Activated CD8-positive, alpha-beta T cell treated with anti-CD3 and anti-CD28 coated beads, Interleukin-2, amount 10 ng/mL, durations not matched to agents 7 days and 5 days (primary cell): ENCODE measurements at regions of chr9 and their contacts with region 1.

Region 1: DNA sequence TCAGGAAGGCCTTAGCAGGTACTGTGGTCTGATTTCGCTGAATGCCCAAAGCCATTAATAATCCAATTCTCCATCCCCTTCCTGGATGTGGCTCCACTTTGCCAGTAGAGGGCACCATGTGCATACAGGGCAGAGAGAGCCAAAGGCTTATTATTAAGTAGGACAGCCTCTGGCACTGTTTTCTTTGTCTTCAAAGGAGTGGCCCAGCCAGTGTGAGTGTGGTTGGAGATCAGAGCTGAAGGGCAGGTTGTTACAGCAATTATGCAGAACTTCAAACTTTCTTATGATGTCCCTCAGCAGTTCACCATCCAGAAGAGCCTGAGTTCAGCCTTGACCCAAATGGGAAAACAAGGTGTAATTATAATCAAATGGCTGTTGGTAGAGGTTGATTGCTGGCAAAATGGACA is 38.6 kb upstream of the CEMIP2 start:
- DNase-seq: peak; percentile 78
- ATAC-seq: peak; percentile 99
- H3K4me3 Mint-ChIP-seq: no peak overlapping the region
- H3K27ac Mint-ChIP-seq: no peak overlapping the region
- H3K4me1 Mint-ChIP-seq: peaks cover 5% of the 10 kb centered on the region
- H3K27me3 Mint-ChIP-seq: no peaks in the 10 kb centered on the region

Region 2: GRCh38 chr9:71604197-71605063 is 202.5 kb before region 1 on chr9:
- CTCF ChIA-PET with region 1: interaction called, 11 read pairs
- POLR2A ChIA-PET with region 1: no interaction called
- DNase-seq: peak; percentile 88
- ATAC-seq: peak; percentile 89
- H3K4me3 Mint-ChIP-seq: no peak overlapping the region
- H3K27ac Mint-ChIP-seq: no peak overlapping the region
- H3K4me1 Mint-ChIP-seq: no peaks in the 10 kb centered on the region
- H3K27me3 Mint-ChIP-seq: peaks cover 9% of the 10 kb centered on the region

Region 3: GRCh38 chr9:71768388-71769174 is 38.3 kb before region 1 on chr9 and contains the start of gene CEMIP2:
- CTCF ChIA-PET with region 1: interaction called, 23 read pairs
- POLR2A ChIA-PET with region 1: no interaction called
- DNase-seq: peak; percentile 92
- ATAC-seq: peak; percentile 84
- H3K4me3 Mint-ChIP-seq: peak within 1 kb of the TSS; percentile 89
- H3K27ac Mint-ChIP-seq: peak within 1 kb of the TSS; percentile 90
- H3K4me1 Mint-ChIP-seq: peaks cover 45% of the 10 kb centered on the region
- H3K27me3 Mint-ChIP-seq: no peaks in the 10 kb centered on the region
- total RNA-seq, gene CEMIP2: 46.5 TPM

Region 4: GRCh38 chr9:71783120-71783530 is 23.8 kb before region 1 on chr9:
- CTCF ChIA-PET with region 1: interaction called, 68 read pairs
- POLR2A ChIA-PET with region 1: interaction called, 3 read pairs
- DNase-seq: peak; percentile 90
- ATAC-seq: peak; percentile 96
- H3K4me3 Mint-ChIP-seq: peak overlapping the region; percentile 67
- H3K27ac Mint-ChIP-seq: peak overlapping the region; percentile 99
- H3K4me1 Mint-ChIP-seq: peaks cover 53% of the 10 kb centered on the region
- H3K27me3 Mint-ChIP-seq: no peaks in the 10 kb centered on the region

Region 5: DNA sequence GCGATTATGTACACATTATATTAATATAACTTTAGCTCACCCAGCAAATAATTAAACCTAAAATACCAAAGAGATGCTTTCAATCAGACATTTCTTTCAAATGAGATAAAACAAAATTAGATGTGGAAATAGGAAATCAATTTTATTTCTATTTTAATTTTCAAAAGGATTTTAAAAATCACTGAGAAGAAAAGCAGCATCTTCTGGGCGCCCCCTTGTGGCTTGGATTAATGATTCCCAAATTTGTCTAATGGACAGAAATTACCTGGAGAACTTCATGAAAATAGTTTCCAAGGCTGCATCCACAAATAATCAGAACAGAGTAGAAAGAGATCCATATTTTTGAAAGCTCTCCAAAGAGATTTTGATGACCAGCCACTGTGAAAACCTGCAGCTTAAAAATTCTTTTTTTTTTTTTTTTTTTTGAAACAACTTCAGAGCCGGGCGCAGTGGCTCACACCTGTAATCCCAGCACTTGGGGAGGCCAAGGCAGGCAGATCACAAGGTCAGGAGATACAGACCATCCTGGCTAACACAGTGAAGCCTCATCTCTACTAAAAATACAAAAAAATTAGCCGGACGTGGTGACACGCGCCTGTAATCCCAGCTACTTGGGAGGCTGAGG is 12.3 kb after region 1 on chr9:
- CTCF ChIA-PET with region 1: interaction called, 115 read pairs
- POLR2A ChIA-PET with region 1: interaction called, 3 read pairs
- DNase-seq: peak; percentile 54
- ATAC-seq: no peak
- H3K4me3 Mint-ChIP-seq: no peak overlapping the region
- H3K27ac Mint-ChIP-seq: no peak overlapping the region
- H3K4me1 Mint-ChIP-seq: peaks cover 18% of the 10 kb centered on the region
- H3K27me3 Mint-ChIP-seq: no peaks in the 10 kb centered on the region

Region 6: DNA sequence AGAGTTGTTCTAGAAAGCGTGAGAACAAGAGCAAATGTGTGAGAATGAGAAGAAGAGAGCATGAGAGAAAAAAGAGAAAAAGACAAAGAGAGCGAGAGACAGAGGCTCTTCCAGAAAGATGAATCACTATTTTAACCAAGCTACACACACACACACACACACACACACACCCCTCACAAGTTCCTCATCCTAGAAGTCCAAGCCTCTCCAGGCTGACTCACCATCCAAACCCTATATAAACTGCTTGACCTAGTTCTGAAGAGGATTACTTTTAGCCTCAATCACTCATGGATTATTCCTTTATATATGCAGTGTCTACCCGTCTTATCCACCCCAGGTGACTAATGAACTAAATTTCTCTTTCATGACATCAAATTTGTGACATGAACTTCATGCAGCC is 215.9 kb after region 1 on chr9:
- CTCF ChIA-PET with region 1: interaction called, 163 read pairs
- POLR2A ChIA-PET with region 1: interaction called, 5 read pairs
- DNase-seq: no peak
- ATAC-seq: no peak
- H3K4me3 Mint-ChIP-seq: no peak overlapping the region
- H3K27ac Mint-ChIP-seq: no peak overlapping the region
- H3K4me1 Mint-ChIP-seq: peaks cover 7% of the 10 kb centered on the region
- H3K27me3 Mint-ChIP-seq: no peaks in the 10 kb centered on the region